Activated CD4-positive, alpha-beta memory T cell treated with anti-CD3 and anti-CD28 coated beads for 36 hours (primary cell): ENCODE measurements at regions of chr5 and their contacts with region 1.

Region 1: GRCh38 chr5:66306105-66306843 is 162.2 kb downstream of the SREK1 start:
- DNase-seq: peak; percentile 45
- H3K4me3 Mint-ChIP-seq: no peak overlapping the region
- H3K27ac Mint-ChIP-seq: no peak overlapping the region
- H3K4me1 Mint-ChIP-seq: peaks cover 3% of the 10 kb centered on the region
- H3K27me3 Mint-ChIP-seq: peaks cover 10% of the 10 kb centered on the region

Region 2: GRCh38 chr5:65913519-65913918 is 392.8 kb before region 1 on chr5:
- CTCF ChIA-PET with region 1: no interaction called
- POLR2A ChIA-PET with region 1: no interaction called
- intact Hi-C with region 1: no loop called
- DNase-seq: no peak
- H3K4me3 Mint-ChIP-seq: no peak overlapping the region
- H3K27ac Mint-ChIP-seq: no peak overlapping the region
- H3K4me1 Mint-ChIP-seq: no peaks in the 10 kb centered on the region
- H3K27me3 Mint-ChIP-seq: no peaks in the 10 kb centered on the region

Region 3: DNA sequence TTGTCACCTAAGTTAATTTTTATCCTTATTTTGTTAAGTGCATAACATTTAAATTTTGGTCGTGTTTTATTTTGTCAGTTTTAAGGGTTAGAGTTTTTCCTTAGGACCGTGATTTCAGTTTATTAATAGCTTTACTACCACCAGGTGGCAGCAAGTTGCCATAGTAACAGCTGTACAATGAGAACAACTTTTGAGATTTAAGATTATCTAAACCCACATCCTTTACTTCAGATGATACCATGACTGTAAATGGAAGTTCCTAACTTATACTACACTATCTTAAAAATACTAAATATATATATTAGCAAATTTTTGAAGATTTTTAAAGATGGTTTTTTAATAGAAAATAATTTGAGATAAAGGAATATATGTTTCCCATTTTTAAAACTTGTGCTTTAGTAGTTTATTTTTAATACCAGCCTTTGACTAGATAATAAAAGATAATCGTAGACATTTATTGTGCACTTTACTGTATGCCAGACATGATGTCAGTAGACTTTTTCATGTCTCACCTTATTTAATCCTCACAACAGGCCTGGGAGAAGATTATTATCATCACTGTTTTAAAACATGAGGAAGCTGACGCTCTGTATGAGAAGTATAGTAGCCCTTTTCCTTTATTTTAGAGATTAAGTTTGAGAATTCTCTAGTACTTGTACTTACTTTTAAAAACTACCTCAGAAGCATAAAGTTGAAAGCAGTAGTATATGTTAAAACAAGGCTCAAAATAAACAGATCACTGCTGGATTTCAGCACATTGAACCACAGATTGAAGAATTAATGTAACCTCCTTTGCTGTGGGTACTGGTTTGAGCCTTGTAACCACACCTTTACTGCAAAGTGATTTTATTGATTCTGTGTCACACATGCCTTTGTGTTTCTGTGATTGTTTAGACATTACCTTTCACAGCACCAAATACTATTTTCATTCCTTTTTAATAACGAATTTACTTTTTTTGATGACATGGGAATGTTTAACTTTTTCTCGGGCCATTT is 134.6 kb before region 1 on chr5:
- CTCF ChIA-PET with region 1: interaction called, 4 read pairs
- POLR2A ChIA-PET with region 1: no interaction called
- intact Hi-C with region 1: loop called (anchors 10 kb)
- DNase-seq: peak; percentile 48
- H3K4me3 Mint-ChIP-seq: no peak overlapping the region
- H3K27ac Mint-ChIP-seq: no peak overlapping the region
- H3K4me1 Mint-ChIP-seq: peaks cover 29% of the 10 kb centered on the region
- H3K27me3 Mint-ChIP-seq: no peaks in the 10 kb centered on the region

Region 4: DNA sequence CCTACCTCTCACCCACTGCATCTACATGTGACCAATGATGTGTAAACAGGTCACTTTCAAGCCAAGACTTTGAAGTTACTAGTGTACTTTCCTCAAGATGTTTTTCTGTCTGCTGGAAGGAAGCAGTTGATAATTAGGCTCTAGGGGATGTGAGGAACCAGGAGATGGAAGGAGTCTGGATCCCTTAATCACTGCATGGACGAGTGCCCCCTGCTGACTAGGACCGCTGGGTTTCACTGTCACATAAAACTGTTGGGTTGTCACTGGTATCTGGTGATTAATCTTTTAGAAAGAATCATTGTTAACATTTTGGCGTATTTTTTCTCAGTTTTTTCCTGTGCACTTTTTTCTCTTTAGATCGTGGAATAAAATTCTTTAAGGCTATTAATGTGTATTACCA is 82.6 kb before region 1 on chr5:
- CTCF ChIA-PET with region 1: no interaction called
- POLR2A ChIA-PET with region 1: no interaction called
- intact Hi-C with region 1: no loop called
- DNase-seq: peak; percentile 17
- H3K4me3 Mint-ChIP-seq: no peak overlapping the region
- H3K27ac Mint-ChIP-seq: no peak overlapping the region
- H3K4me1 Mint-ChIP-seq: no peaks in the 10 kb centered on the region
- H3K27me3 Mint-ChIP-seq: no peaks in the 10 kb centered on the region

Region 5: DNA sequence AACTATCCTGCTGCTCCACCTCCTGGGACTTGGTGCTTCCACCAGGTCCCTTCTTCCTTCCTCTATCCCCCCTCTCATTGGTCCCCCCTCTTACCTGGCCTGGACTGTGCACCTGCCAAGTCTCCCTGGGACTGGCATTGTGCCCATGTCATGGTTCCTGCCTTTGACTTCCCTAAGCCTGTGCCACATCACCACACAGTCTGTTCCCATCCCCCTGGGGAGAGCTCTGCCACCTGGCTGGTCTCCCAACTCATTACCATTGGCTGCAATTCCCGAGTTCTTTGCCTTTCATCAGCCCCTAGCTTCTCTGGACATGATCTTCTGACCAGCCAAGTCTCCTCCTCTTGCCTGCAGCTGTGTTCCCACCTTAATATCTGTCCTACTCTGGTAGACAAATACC is 18.1 kb after region 1 on chr5:
- CTCF ChIA-PET with region 1: interaction called, 21 read pairs
- POLR2A ChIA-PET with region 1: no interaction called
- intact Hi-C with region 1: no loop called
- DNase-seq: no peak
- H3K4me3 Mint-ChIP-seq: no peak overlapping the region
- H3K27ac Mint-ChIP-seq: no peak overlapping the region
- H3K4me1 Mint-ChIP-seq: peaks cover 10% of the 10 kb centered on the region
- H3K27me3 Mint-ChIP-seq: peaks cover 21% of the 10 kb centered on the region

Region 6: DNA sequence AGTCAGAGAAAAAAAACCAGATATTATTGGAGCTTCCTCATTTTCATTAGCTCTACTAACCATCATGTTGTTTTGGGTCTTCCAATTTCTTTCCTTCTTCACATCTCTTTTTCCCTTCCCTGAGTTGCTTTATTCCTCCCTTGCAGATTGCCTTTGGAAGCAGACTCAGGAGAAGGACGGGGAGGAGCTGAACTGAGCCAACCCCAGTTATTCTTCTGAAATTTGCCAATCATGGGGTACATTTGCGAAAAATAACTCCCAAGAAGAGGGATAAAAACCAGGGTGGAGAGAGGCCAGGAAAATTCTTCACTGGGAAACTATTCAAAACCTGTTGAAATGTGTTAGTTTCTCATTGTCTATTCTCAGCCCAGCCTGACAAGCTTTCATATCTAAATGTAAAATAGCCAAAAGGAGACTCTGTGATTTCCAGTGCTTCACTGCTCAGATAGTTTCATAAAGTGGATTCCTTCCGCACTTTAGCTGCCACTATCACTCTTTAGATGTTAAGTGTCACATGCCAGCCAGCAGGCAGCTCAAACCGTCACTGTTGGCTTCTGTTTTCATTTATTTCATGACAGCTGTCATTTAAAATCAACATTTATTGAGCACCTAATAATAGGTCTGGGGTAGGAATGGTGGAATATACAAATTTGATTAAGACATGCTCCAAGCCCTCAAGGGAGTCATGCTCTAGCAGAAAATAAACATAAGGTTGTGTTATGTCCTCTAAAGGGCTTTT is 42.3 kb after region 1 on chr5:
- CTCF ChIA-PET with region 1: interaction called, 11 read pairs
- POLR2A ChIA-PET with region 1: no interaction called
- intact Hi-C with region 1: no loop called
- DNase-seq: no peak
- H3K4me3 Mint-ChIP-seq: no peak overlapping the region
- H3K27ac Mint-ChIP-seq: no peak overlapping the region
- H3K4me1 Mint-ChIP-seq: no peaks in the 10 kb centered on the region
- H3K27me3 Mint-ChIP-seq: peaks cover 8% of the 10 kb centered on the region

Region 7: GRCh38 chr5:66757188-66757833 is 451.0 kb after region 1 on chr5:
- CTCF ChIA-PET with region 1: interaction called, 100 read pairs
- POLR2A ChIA-PET with region 1: interaction called, 3 read pairs
- intact Hi-C with region 1: loop called (anchors 1 kb)
- DNase-seq: peak; percentile 37
- H3K4me3 Mint-ChIP-seq: no peak overlapping the region
- H3K27ac Mint-ChIP-seq: no peak overlapping the region
- H3K4me1 Mint-ChIP-seq: no peaks in the 10 kb centered on the region
- H3K27me3 Mint-ChIP-seq: peaks cover 15% of the 10 kb centered on the region

Region 8: DNA sequence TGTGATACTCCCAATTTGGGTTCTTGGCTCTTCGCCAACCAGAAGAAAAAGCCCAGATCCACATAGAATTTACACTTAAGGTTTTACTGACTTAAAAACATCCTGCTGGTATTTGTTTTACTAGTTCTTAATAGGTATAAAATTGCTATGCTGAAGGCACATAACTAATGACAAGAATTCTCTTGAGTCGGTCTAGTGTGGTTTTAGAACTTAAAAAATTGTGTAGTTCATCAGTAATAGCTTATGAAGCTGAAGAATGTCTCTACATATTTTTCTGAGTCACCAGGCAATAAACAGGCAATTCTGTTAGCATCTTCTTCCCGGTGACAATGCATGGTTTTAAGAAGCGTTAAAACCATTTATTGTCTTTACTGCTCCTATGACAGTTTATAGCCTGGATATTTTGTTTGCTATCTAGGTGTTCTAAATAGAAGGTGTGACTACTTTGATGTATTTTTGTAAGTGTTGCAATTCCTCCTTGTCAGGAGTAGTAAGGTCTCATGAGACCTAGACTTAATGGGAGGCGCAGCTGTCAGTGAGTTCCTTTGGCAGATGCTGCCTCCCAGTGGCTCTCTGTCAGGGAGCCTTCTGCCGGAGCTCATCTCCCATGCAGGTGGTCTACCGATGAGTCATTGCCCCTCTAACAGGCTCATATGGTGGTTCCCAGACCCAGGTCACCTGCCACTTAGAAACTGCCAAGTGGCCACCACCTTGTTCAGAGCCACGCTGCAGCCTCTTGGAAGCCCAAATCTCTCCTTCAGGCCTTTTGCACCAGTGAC is 463.8 kb after region 1 on chr5:
- CTCF ChIA-PET with region 1: interaction called, 13 read pairs
- POLR2A ChIA-PET with region 1: no interaction called
- intact Hi-C with region 1: loop called (anchors 5 kb)
- DNase-seq: no peak
- H3K4me3 Mint-ChIP-seq: no peak overlapping the region
- H3K27ac Mint-ChIP-seq: no peak overlapping the region
- H3K4me1 Mint-ChIP-seq: no peaks in the 10 kb centered on the region
- H3K27me3 Mint-ChIP-seq: peaks cover 7% of the 10 kb centered on the region

Region 9: DNA sequence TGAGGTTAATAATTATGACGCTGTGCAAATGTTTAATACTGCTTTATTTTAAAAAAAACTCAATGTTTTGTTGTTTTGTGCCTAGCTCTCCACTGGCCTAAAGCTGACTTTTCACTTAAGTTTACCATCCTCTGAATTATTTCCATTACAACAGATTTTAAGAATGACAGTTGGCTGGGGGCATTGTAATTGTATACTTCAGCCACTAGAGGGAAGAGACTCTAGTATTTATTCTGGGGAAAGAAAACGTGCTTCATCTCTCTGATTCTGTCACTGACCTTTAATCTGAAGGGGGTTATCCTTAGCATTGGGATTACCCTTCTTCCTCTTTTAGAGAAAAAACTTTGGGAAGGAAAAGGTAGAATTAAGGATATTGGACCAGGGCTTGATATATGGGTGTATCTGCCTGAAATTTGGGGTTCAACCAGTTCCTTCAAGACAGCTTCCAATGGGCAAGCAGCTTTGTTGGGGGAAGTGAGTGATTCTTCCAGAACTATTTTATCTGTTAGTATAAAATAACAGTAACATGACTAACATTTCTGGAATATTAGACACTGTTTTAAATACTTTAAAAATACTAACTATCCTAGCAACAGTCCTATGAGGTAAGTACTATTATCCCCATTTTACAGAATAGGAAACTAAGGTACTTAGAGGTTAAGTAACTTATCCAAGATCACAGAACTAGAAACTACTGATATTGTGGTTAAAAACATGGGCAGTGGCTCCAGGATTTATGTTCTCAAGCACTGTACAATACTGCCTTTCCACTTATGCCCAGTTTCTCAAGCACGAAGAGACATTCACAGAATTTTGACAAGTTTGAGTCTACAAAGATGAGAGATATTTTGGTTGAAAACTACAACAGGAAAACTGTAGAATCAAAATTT is 681.9 kb after region 1 on chr5:
- CTCF ChIA-PET with region 1: interaction called, 12 read pairs
- POLR2A ChIA-PET with region 1: no interaction called
- intact Hi-C with region 1: no loop called
- DNase-seq: no peak
- H3K4me3 Mint-ChIP-seq: no peak overlapping the region
- H3K27ac Mint-ChIP-seq: no peak overlapping the region
- H3K4me1 Mint-ChIP-seq: peaks cover 4% of the 10 kb centered on the region
- H3K27me3 Mint-ChIP-seq: no peaks in the 10 kb centered on the region